Dendritic cell treated with granulocyte-macrophage colony-stimulating factor and Interleukin-4, amounts not matched to agents 40 ng/mL and 50 ng/mL, for 4 days (primary cell): ENCODE measurements at regions of chr12 and their contacts with region 1.

Region 1: DNA sequence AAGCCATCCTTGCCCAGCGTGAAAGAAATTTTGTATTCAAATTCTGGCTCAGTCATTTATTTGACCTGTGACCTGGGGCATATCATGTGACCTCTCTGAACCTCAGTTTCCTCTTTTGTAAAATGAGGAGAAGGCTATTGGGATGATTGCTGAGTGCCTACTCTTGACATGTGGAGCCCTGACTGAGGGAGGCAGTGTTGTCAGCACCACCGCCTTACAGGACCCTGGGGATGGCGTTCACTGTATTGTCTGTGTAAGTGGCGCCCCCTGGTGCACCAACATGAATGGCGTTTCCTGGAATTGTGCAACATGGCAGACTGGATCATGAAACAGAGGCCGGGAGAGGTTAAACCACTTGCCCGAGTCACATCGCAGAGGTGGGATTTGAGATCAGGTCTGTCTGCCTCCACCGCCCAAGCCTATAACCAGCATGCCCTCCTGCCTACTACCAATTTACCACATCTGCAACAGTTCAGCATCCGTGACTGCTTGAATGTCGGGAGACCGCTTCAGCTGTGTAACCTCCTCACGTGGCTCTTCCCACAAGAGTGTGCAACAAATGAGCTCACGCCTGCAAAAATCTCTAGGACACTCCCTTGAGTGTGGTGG is 20.1 kb upstream of the CCDC63 start:
- H3K4me3 Mint-ChIP-seq: peak overlapping the region; percentile 67
- H3K27ac Mint-ChIP-seq: peak overlapping the region; percentile 72
- H3K4me1 Mint-ChIP-seq: peaks cover 9% of the 10 kb centered on the region
- H3K27me3 Mint-ChIP-seq: peaks cover 14% of the 10 kb centered on the region

Region 2: DNA sequence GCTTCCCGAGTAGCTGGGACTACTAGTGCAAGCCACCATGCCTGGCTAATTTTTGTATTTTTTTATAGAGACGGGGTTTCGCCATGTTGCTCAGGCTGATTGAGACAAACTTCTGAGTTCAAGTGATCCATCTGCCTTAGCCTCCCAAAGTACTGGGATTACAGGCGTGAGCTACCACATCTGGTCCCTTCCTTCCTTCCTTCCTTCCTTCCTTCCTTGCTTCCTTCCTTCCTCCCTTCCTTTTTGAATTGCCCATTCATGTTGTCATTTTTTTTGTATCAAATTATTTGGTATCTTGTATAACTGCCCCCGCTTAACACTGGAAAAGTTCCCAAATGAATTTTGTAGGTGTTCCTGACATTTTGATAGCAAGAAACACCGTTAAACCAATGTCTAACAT is 312.9 kb before region 1 on chr12:
- intact Hi-C with region 1: loop called (anchors 5 kb)
- H3K4me3 Mint-ChIP-seq: no peak overlapping the region
- H3K27ac Mint-ChIP-seq: no peak overlapping the region
- H3K4me1 Mint-ChIP-seq: no peaks in the 10 kb centered on the region
- H3K27me3 Mint-ChIP-seq: no peaks in the 10 kb centered on the region

Region 3: DNA sequence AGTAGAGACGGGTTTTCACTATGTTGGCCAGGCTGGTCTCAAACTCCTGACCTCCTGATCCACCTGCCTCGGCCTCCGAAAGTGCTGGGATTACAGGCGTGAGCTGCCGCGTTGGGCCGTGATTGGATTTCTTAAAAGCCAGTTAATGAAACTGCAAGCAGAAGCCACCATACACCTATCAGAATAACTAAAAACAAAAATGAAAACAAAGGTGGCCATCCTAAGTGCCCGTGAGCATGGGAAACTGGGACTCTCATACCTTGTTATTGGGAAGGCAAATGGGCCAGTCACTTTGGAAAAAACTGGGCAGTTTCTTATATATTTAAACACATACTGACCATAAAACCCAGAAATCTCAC is 220.5 kb before region 1 on chr12:
- intact Hi-C with region 1: loop called (anchors 5 kb)
- H3K4me3 Mint-ChIP-seq: peak overlapping the region; percentile 76
- H3K27ac Mint-ChIP-seq: peak overlapping the region; percentile 96
- H3K4me1 Mint-ChIP-seq: peaks cover 17% of the 10 kb centered on the region
- H3K27me3 Mint-ChIP-seq: no peaks in the 10 kb centered on the region